Right lobe of liver (tissue), 6 donors: ENCODE measurements at regions of chr5 and their contacts with region 1.

Region 1: DNA sequence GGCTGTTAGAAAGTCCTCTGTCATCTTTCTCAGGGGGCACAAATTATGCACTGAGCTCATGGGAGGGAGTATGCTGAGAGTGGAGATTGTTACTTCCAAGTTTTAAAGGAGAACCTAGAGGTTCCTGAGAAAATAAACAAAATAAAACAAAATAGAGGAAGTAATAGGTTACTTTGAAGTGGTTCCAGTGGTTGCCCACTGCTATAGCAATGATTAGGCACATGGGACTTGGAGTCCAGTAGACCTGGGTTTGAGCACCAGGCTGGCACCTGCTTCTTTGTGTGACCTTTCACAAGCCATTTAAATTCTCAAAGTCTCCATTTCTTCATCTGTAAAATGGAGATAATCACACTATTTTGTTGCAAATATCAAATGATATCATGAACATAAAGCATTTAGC is 13.8 kb upstream of the CDC23 start:
- DNase-seq: no peak
- ATAC-seq: no peak
- H3K4me3 ChIP-seq: no peak overlapping the region
- H3K27ac ChIP-seq: no peak overlapping the region
- H3K4me1 ChIP-seq: peaks cover 0 to 18% (median 0%) of the 10 kb centered on the region in 4 donors
- H3K27me3 ChIP-seq: no peaks in the 10 kb centered on the region
- CTCF ChIP-seq: no peak
- POLR2A ChIP-seq: no peak

Region 2: GRCh38 chr5:137902408-137903133 is 324.3 kb before region 1 on chr5:
- intact Hi-C with region 1: no loop called
- DNase-seq: no peak
- ATAC-seq: no peak
- H3K4me3 ChIP-seq: no peak overlapping the region
- H3K27ac ChIP-seq: no peak overlapping the region
- H3K4me1 ChIP-seq: no peaks in the 10 kb centered on the region
- H3K27me3 ChIP-seq: no peaks in the 10 kb centered on the region
- CTCF ChIP-seq: no peak
- POLR2A ChIP-seq: no peak

Region 3: GRCh38 chr5:138282920-138283742 is 56.2 kb after region 1 on chr5:
- intact Hi-C with region 1: loop called (anchors 5 to 10 kb)
- DNase-seq: peak in 2 of 3 donors; percentile 33 to 62
- ATAC-seq: peak; percentile 97 to 99 (median 98)
- H3K4me3 ChIP-seq: no peak overlapping the region
- H3K27ac ChIP-seq: no peak overlapping the region
- H3K4me1 ChIP-seq: no peaks in the 10 kb centered on the region
- H3K27me3 ChIP-seq: no peaks in the 10 kb centered on the region
- CTCF ChIP-seq: peak; percentile 56 to 72 (median 68)
- POLR2A ChIP-seq: no peak

Region 4: GRCh38 chr5:138418444-138418843 is 191.5 kb after region 1 on chr5:
- intact Hi-C with region 1: no loop called
- DNase-seq: no peak
- ATAC-seq: no peak
- H3K4me3 ChIP-seq: no peak overlapping the region
- H3K27ac ChIP-seq: no peak overlapping the region
- H3K4me1 ChIP-seq: no peaks in the 10 kb centered on the region
- H3K27me3 ChIP-seq: no peaks in the 10 kb centered on the region
- CTCF ChIP-seq: no peak
- POLR2A ChIP-seq: no peak